ENCODE measurements at regions of chr4 and their contacts with region 1.

Region 1: DNA sequence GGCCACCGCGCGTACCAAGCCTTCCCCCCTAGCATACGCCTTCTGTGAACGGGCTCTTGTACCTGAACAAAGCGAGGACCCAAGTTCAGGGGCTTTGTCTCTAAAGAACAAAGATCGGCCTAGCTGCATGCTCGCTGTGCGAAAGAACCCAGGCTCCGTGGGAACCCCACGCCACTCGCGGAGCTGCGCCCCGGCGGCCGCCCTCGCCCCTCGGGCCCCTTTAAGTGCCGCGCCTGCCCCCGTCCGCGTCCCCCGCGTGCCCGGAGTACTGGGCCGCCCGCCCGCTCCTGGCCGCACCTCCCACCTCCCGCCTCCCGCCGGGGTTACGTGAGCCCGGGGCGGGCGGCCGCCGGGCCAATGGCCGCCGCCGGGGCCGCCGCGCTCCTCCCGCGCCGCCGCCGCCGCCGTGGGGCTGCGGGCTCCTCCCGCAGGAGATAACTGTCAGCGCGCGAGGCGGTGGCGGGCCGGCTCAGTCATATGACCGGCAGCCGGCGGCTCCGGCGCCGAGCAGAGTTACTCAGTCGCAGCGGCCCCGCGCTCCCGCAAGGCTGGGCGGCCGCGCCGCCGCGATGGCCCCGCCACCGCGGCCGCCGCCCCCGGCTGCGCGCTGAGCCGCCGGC is at the start of gene FNIP2:
- DNase-seq: peak; percentile 72
- H3K4me3 ChIP-seq: peak within 1 kb of the TSS; percentile 56 to 79
- H3K27ac ChIP-seq: peak within 1 kb of the TSS; percentile 76 to 84
- H3K4me1 ChIP-seq: no peaks in the 10 kb centered on the region
- H3K27me3 ChIP-seq: no peaks in the 10 kb centered on the region
- CTCF ChIP-seq: no peak
- POLR2A ChIP-seq: peak; percentile 53
- total RNA-seq, gene FNIP2: 31.1 to 39.8 TPM

Region 2: DNA sequence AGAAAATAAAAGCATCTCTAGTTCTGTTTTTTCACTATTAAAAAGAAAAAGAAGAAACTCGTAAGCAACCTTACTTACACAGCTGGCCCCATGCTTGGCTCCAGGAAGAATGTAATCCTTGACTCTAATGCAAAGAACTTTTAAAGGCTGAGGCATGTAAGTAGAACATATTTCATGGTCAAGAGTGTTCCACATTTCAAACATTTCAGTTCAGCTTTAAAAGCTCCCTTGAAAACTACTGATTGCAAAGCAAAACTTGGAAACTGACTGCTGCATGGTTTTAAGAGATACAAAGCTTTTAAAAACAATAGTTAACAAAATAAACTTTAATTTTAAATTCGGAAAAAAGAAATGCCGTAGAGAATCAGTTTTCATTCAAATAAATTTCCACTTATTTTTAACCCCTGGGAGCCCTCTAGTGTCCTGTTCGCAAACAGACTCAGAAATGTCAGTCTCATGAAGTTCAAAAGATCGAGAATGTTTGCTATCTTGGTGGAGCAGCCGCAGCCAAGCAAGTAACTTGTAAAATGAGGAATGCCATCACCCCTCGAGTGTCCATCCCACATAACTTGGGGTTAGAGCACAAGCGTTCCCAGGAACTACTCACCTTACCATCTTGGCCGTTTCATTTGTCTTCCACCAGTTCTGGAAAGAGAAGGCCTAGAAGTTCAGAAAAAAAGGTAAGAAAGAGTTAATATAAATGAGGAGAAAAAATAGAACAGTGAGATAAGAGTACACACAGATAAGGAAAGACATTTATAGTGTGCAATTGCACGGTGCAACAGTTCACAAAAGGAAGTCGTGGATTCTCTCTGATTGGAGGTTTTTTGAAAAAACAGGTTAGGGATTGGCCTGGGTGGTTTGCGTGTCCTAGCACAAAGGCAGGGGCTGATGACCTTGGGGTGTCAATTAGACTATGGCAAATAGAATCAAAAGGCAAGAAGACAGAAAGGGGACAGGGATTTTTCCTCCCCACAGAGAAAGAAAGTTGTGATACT is 596.1 kb before region 1 on chr4 and contains the start of gene GASK1B:
- intact Hi-C with region 1: loop called (anchors 10 kb)
- DNase-seq: peak; percentile 20
- H3K4me3 ChIP-seq: peak within 1 kb of the TSS; percentile 30 to 39
- H3K27ac ChIP-seq: peak within 1 kb of the TSS; percentile 66 to 71
- H3K4me1 ChIP-seq: peaks cover 7% of the 10 kb centered on the region
- H3K27me3 ChIP-seq: no peaks in the 10 kb centered on the region
- CTCF ChIP-seq: peak in 3 of 4 experiments; percentile 47 to 63 (median 58)
- POLR2A ChIP-seq: no peak
- total RNA-seq, gene GASK1B: 20.2 to 27.3 TPM

Region 3: DNA sequence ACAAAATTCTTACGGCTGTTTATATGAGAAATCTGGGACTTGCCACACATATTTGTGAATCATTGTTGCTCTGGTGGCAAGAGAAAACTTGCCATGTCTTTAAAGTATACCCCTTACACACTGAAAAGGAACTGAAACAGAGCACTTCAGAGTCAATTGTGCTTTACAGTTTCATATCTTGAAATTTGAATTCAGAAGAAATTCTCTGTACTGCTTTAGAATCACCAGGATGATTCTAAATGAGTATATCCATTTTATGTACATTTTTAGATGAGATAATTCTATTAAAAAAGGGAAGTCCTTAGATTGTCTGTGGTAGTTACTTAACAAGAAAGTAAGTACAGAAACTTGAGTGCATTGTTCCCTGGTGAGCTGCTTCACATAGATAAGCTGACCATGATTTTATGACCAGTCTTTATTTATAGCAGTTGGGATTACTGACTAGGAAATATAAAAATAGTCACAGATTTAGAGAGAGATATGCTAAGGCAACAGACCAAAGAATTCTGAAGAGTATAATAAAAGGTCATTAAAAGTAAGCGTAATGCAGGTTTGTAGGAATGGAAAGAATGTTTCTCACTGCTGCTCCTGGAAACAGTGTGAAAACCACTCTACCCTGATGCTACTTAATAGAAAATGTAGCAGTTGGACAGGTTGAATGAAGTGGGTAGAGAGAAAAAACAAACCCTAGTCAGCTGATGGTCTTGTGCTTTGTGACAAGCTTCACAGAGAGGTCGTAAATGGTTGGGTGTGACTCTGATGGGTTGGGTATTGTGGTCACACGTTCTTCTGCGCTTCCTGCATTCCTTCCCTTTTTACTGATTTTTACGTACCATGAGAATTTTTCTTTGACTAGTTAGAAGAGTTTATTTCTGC is 41.2 kb after region 1 on chr4:
- intact Hi-C with region 1: loop called (anchors 2 kb)
- DNase-seq: peak; percentile 58
- H3K4me3 ChIP-seq: no peak overlapping the region
- H3K27ac ChIP-seq: peak overlapping the region; percentile 50 to 62
- H3K4me1 ChIP-seq: peaks cover 10% of the 10 kb centered on the region
- H3K27me3 ChIP-seq: no peaks in the 10 kb centered on the region
- CTCF ChIP-seq: no peak
- POLR2A ChIP-seq: peak; percentile 13

Region 4: DNA sequence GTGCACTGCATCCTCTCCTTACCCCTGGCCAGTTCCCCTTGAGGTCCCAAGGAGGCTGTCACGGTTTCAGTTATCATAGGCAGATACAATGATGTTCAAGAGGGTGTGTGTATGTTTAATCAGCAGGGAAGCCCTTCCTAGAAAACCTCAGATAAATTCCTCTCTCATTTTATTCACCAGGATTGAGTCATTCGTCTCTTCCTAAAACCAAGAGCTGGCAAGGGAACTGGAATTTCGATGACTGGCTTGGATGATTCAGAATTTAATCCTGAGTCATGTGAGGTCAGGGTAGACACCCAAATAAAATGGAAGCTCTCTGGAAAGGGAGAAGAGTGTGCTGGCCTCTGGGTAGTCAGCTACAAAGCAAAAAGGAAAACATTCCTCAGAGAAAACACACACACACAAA is 228.0 kb after region 1 on chr4:
- intact Hi-C with region 1: no loop called
- DNase-seq: no peak
- H3K4me3 ChIP-seq: no peak overlapping the region
- H3K27ac ChIP-seq: no peak overlapping the region
- H3K4me1 ChIP-seq: no peaks in the 10 kb centered on the region
- H3K27me3 ChIP-seq: no peaks in the 10 kb centered on the region
- CTCF ChIP-seq: no peak
- POLR2A ChIP-seq: no peak

Measured in prostate gland (tissue), 2 donors.